RWPE1 (cell line): ENCODE measurements at regions of chr11 and their contacts with region 1.

Region 1: DNA sequence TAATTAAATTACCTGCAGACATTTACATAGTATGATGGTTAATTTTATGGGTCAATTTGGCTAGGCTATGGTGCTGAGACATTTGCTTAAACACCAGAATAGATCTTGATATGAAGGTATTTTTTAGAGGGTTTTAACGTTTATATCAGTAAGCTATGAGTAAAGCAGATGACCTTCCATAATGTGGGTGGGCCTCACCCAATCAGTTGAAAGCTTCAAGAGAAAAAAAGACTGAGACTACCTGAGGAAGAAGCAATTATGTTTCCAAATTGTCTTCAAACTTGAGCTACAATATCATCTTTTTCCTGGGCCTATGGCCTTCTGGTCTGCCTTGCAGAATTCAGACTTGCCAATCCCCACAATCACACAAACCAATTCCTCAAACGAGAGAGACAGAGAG is 498.8 kb upstream of the API5 start:
- DNase-seq: no peak
- H3K27ac ChIP-seq: no peak overlapping the region
- CTCF ChIP-seq: no peak

Region 2: GRCh38 chr11:42462558-42463310 is 350.2 kb before region 1 on chr11:
- CTCF ChIA-PET with region 1: no interaction called
- POLR2A ChIA-PET with region 1: no interaction called
- DNase-seq: no peak
- H3K27ac ChIP-seq: no peak overlapping the region
- CTCF ChIP-seq: no peak

Region 3: GRCh38 chr11:42766839-42767238 is 46.1 kb before region 1 on chr11:
- CTCF ChIA-PET with region 1: interaction called, 10 read pairs
- POLR2A ChIA-PET with region 1: no interaction called
- DNase-seq: no peak
- H3K27ac ChIP-seq: no peak overlapping the region
- CTCF ChIP-seq: no peak